PC-9 (cell line): ENCODE measurements at regions of chr2 and their contacts with region 1.

Region 1: GRCh38 chr2:1593371-1594290 is 150.7 kb downstream of the PXDN start:
- DNase-seq: peak; percentile 81
- H3K4me3 ChIP-seq: no peak overlapping the region; the same call in 1 of the 2 replicates
- H3K27ac ChIP-seq: peak overlapping the region; percentile 38
- H3K4me1 ChIP-seq: peaks cover 31% of the 10 kb centered on the region
- H3K27me3 ChIP-seq: peaks cover 7% of the 10 kb centered on the region; the same call in 1 of the 2 replicates
- CTCF ChIP-seq: no peak

Region 2: GRCh38 chr2:1527153-1527992 is 66.3 kb before region 1 on chr2:
- CTCF ChIA-PET with region 1: no interaction called
- POLR2A ChIA-PET with region 1: no interaction called
- intact Hi-C with region 1: no loop called
- DNase-seq: no peak
- H3K4me3 ChIP-seq: no peak overlapping the region
- H3K27ac ChIP-seq: no peak overlapping the region
- H3K4me1 ChIP-seq: no peaks in the 10 kb centered on the region
- H3K27me3 ChIP-seq: no peaks in the 10 kb centered on the region
- CTCF ChIP-seq: no peak

Region 3: DNA sequence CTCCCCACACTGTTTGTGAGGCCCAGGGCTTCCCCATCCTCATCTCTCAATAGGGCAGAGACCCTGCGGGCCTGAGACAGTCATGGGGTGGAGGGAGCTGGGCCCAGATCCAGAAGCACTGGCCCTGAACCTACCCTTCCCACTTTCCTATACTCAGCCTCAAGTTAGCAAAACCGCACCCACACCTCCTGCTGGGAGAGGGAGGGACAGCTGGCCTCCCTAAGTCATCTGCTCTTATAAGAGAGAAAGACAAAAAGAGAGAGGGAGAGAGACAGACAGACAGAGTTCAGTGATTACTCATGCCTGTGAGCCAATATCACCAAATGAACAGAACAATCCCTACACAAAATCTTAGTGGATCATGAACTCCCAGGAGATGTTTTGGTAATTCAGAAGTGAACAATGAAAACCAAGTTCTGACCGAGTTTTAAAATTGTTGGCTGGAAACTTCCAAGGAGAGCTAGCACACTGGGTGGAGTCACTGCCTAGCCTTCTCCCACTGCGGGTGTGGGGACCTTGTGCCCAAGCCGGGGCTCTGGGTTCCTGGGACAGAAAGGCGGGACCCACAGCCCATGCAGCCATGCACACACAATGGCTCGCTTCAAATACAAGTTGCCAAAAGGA is 20.2 kb after region 1 on chr2:
- CTCF ChIA-PET with region 1: no interaction called
- POLR2A ChIA-PET with region 1: interaction called, 25 read pairs
- intact Hi-C with region 1: no loop called
- DNase-seq: peak in 1 of 2 experiments; percentile 41
- H3K4me3 ChIP-seq: no peak overlapping the region
- H3K27ac ChIP-seq: peak overlapping the region; percentile 1; the same call in 1 of the 2 replicates
- H3K4me1 ChIP-seq: peaks cover 33% of the 10 kb centered on the region
- H3K27me3 ChIP-seq: peaks cover 12% of the 10 kb centered on the region; the same call in 1 of the 2 replicates
- CTCF ChIP-seq: no peak

Region 4: DNA sequence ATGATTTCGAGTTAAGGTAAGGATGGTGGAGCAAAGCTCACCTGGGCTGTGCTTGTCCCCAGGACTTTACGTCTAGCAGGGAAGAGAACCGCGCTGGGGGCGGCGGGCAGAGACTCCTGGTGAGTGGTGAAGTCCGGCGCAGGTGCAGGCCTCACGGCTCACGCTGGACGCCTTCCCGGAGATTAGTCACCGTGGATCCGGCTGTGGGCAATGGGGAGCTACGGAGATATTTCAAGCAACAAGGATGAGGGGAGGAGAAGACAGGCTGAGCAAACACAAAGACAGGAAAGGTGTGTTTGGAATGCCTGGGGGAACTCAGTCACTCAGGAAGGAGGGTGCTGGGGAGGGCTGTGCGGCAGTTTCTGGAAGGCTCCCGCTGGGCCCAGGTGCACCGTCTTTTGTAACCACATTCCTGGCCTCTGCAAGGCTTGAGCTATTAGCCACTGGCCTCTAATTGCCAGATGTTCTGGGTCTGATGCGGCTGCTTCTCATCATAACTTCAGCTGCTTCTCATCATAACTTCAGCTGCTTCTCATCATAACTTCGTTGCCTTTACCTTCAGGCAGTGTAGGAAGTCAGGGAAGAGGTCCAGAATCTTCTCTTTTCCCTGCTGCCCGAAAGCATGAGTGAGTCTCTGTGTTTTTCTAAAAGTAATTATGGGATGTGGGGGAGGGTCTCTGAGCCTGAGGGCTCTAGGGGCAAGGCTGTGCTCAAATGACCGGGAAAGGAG is 31.7 kb after region 1 on chr2:
- CTCF ChIA-PET with region 1: interaction called, 4 read pairs
- POLR2A ChIA-PET with region 1: no interaction called
- intact Hi-C with region 1: loop called (anchors 1 kb)
- DNase-seq: peak; percentile 85 to 97
- H3K4me3 ChIP-seq: peak overlapping the region; percentile 53
- H3K27ac ChIP-seq: peak overlapping the region; percentile 77
- H3K4me1 ChIP-seq: peaks cover 62% of the 10 kb centered on the region
- H3K27me3 ChIP-seq: no peaks in the 10 kb centered on the region; the same call in 1 of the 2 replicates
- CTCF ChIP-seq: no peak

Region 5: GRCh38 chr2:1742681-1743395 is 149.2 kb after region 1 on chr2:
- CTCF ChIA-PET with region 1: no interaction called
- POLR2A ChIA-PET with region 1: interaction called, 5 read pairs
- intact Hi-C with region 1: loop called (anchors 5 kb)
- DNase-seq: peak; percentile 77
- H3K4me3 ChIP-seq: peak overlapping the region; percentile 64
- H3K27ac ChIP-seq: peak overlapping the region; percentile 66
- H3K4me1 ChIP-seq: peaks cover 13% of the 10 kb centered on the region
- H3K27me3 ChIP-seq: peaks cover 10% of the 10 kb centered on the region; the same call in 1 of the 2 replicates
- CTCF ChIP-seq: peak; percentile 48

Region 6: GRCh38 chr2:2926009-2926857 is 1332.6 kb after region 1 on chr2:
- CTCF ChIA-PET with region 1: no interaction called
- POLR2A ChIA-PET with region 1: interaction called, 14 read pairs
- intact Hi-C with region 1: no loop called
- DNase-seq: no peak
- H3K4me3 ChIP-seq: no peak overlapping the region
- H3K27ac ChIP-seq: no peak overlapping the region
- H3K4me1 ChIP-seq: no peaks in the 10 kb centered on the region
- H3K27me3 ChIP-seq: peaks cover 42% of the 10 kb centered on the region
- CTCF ChIP-seq: no peak